ENCODE measurements at regions of chr13 and their contacts with region 1.

Region 1: GRCh38 chr13:36981156-36981743 is 17.9 kb downstream of the ALG5 start:
- DNase-seq: no peak
- H3K4me3 Mint-ChIP-seq: no peak overlapping the region
- H3K27ac Mint-ChIP-seq: no peak overlapping the region
- H3K4me1 Mint-ChIP-seq: no peaks in the 10 kb centered on the region
- H3K27me3 Mint-ChIP-seq: no peaks in the 10 kb centered on the region

Region 2: GRCh38 chr13:36420437-36420891 is 560.8 kb before region 1 on chr13:
- CTCF ChIA-PET with region 1: no interaction called
- POLR2A ChIA-PET with region 1: no interaction called
- intact Hi-C with region 1: loop called (anchors 1 kb)
- DNase-seq: peak; percentile 79
- H3K4me3 Mint-ChIP-seq: no peak overlapping the region
- H3K27ac Mint-ChIP-seq: peak overlapping the region; percentile 21
- H3K4me1 Mint-ChIP-seq: peaks cover 21% of the 10 kb centered on the region
- H3K27me3 Mint-ChIP-seq: peaks cover 43% of the 10 kb centered on the region

Region 3: DNA sequence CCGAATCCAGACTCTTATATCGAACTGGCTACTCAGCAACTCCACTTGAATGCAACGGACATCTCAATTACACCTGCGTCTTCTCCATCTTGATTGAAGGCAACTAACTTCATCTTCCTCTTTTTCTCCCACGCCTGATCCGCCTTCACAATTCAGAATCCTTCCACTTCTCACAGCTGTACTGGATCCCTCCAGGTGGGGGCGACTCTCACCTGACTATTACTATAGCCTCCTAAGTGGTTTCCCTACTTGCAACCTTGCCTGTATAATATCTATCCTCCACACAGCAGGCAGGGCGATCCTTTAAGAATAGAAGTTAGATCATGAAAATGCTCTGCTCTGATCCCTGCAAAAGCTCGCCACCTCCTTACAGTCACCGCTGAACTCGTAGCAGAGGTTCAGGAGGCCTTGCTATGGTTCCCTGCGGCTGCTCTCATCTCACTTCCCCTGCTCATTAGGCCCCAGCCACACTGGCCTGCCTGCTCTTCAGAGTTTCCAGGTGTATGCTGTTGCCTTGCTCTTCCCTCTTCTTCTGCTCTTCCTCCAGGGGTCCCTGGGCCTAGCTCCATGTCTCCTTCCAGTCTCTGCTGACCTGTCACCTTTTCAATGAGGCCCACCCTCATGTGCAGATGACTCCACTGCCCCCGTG is 130.3 kb before region 1 on chr13:
- CTCF ChIA-PET with region 1: interaction called, 3 read pairs
- POLR2A ChIA-PET with region 1: no interaction called
- intact Hi-C with region 1: loop called (anchors 2 kb)
- DNase-seq: peak; percentile 33
- H3K4me3 Mint-ChIP-seq: no peak overlapping the region
- H3K27ac Mint-ChIP-seq: no peak overlapping the region
- H3K4me1 Mint-ChIP-seq: no peaks in the 10 kb centered on the region
- H3K27me3 Mint-ChIP-seq: peaks cover 12% of the 10 kb centered on the region

Region 4: DNA sequence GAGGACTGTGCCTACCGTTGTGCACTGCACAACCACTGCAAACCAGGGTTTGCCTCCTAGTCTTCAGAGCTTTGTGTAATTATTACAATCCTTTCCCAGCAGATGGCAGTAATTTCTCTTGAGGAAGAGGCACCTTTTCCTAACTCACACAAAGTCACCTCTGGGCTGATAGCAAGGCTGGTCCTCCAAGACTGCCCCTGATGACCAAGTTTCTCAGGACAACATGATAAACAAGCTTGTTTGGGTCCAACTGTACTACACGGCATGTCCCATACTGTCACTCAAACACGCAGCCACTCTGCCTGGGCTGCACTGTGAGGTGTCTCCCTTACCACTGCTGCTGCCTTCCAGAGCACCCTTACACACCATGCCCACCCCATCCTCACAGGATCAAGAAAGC is 123.0 kb before region 1 on chr13:
- CTCF ChIA-PET with region 1: interaction called, 7 read pairs
- POLR2A ChIA-PET with region 1: no interaction called
- intact Hi-C with region 1: loop called (anchors 1 kb)
- DNase-seq: no peak
- H3K4me3 Mint-ChIP-seq: no peak overlapping the region
- H3K27ac Mint-ChIP-seq: no peak overlapping the region
- H3K4me1 Mint-ChIP-seq: peaks cover 4% of the 10 kb centered on the region
- H3K27me3 Mint-ChIP-seq: peaks cover 23% of the 10 kb centered on the region

Region 5: DNA sequence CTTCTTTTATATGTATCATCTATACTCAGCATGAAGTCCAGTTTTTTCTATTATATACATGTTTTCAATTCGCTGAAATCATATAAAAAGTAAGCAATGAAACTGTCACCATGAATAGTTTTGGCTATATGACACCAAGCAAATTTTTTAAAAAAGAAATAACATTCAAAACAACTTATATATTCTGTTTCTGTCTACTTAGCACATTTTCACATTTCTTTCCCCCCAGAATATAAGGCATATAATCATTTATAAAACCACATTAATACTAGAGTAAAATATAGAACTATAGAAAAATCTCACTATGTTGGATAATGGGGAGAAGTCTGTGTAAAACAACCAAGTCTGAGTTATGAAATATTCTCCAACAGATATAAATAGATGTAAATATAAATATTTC is 584.2 kb after region 1 on chr13:
- CTCF ChIA-PET with region 1: no interaction called
- POLR2A ChIA-PET with region 1: no interaction called
- intact Hi-C with region 1: no loop called
- DNase-seq: no peak
- H3K4me3 Mint-ChIP-seq: no peak overlapping the region
- H3K27ac Mint-ChIP-seq: no peak overlapping the region
- H3K4me1 Mint-ChIP-seq: no peaks in the 10 kb centered on the region
- H3K27me3 Mint-ChIP-seq: no peaks in the 10 kb centered on the region